Activated CD4-positive, alpha-beta memory T cell treated with anti-CD3 and anti-CD28 coated beads for 36 hours (primary cell): ENCODE measurements at regions of chr6 and their contacts with region 1.

Region 1: GRCh38 chr6:135880066-135880972 is 28.8 kb downstream of the PDE7B start:
- DNase-seq: peak; percentile 65
- H3K4me3 Mint-ChIP-seq: peak overlapping the region; percentile 72
- H3K27ac Mint-ChIP-seq: peak overlapping the region; percentile 94
- H3K4me1 Mint-ChIP-seq: peaks cover 35% of the 10 kb centered on the region
- H3K27me3 Mint-ChIP-seq: no peaks in the 10 kb centered on the region

Region 2: GRCh38 chr6:135851442-135852271 is 28.7 kb before region 1 on chr6 and contains the start of gene PDE7B:
- CTCF ChIA-PET with region 1: no interaction called
- POLR2A ChIA-PET with region 1: no interaction called
- intact Hi-C with region 1: loop called (anchors 1 kb)
- DNase-seq: peak; percentile 53
- H3K4me3 Mint-ChIP-seq: peak within 1 kb of the TSS; percentile 38
- H3K27ac Mint-ChIP-seq: no peak within 1 kb of the TSS
- H3K4me1 Mint-ChIP-seq: peaks cover 17% of the 10 kb centered on the region
- H3K27me3 Mint-ChIP-seq: peaks cover 1% of the 10 kb centered on the region
- total RNA-seq, gene PDE7B: 0.05 to 0.12 TPM

Region 3: GRCh38 chr6:135869857-135870256 is 10.5 kb before region 1 on chr6:
- CTCF ChIA-PET with region 1: no interaction called
- POLR2A ChIA-PET with region 1: no interaction called
- intact Hi-C with region 1: no loop called
- DNase-seq: peak; percentile 27
- H3K4me3 Mint-ChIP-seq: no peak overlapping the region
- H3K27ac Mint-ChIP-seq: no peak overlapping the region
- H3K4me1 Mint-ChIP-seq: peaks cover 5% of the 10 kb centered on the region
- H3K27me3 Mint-ChIP-seq: no peaks in the 10 kb centered on the region

Region 4: DNA sequence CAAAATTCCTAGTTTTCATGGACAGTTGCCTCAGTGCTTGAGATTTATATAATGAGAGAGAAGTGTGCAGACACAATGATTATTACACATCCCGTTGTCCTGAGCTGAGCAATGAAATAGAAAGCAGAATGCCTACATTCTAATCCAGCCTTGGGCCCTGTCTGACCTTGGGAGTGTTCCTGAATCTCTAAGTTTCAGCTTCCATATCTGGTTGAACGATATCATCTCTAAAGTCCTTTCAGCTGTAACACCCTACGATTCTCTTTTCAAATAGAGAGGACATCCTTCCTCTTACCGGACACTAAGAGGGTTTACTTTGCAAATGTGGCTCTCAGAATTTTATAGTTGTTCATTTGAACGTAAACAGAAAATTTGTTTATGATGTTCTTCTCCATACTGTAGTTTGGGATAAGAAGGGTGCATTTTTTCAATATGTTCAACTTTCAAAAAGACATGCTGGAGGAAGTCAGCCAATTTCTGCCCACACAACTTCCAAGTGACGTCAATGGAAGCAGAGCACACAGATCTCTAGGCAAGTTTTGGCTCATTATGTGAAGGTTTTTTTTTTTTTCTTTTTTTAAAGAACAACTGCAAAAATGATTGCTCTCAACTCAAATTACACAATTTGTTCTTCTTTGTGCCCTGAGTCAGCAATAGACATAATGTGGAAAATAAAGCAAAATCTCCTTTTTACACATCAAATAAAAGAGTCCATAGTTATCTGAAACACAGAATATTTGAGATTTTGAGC is 21.6 kb after region 1 on chr6:
- CTCF ChIA-PET with region 1: no interaction called
- POLR2A ChIA-PET with region 1: no interaction called
- intact Hi-C with region 1: loop called (anchors 1 kb)
- DNase-seq: peak; percentile 33
- H3K4me3 Mint-ChIP-seq: no peak overlapping the region
- H3K27ac Mint-ChIP-seq: no peak overlapping the region
- H3K4me1 Mint-ChIP-seq: peaks cover 12% of the 10 kb centered on the region
- H3K27me3 Mint-ChIP-seq: peaks cover 2% of the 10 kb centered on the region

Region 5: DNA sequence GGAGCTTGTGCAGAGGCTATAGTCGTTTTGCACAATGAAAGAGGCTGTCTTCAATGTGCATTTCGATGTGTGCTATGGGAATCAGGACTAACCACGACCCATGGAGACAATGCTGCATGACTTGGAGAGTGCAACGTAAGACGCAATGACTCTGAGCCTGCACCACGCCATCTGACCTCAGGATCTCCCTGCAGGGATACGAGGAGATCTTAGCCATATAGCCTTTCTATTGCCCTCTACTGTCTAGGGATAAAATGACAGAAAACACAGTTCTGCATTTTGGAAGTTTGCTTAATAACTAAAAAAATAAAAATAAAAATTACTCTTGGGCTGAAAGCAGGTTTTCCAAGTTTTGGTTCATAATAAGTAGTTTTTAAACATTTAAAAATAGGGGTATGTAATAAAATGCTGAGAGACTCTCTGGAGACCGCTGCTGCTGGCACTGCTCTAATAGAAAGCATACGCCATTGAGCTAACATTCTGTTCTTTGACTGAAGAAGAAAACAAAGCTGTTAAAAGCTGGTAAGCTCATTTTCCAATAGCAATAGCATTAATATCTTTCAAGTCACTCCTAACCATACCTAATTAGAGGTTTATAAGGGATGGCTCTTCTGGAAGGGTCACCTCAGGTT is 58.4 kb after region 1 on chr6:
- CTCF ChIA-PET with region 1: no interaction called
- POLR2A ChIA-PET with region 1: no interaction called
- intact Hi-C with region 1: no loop called
- DNase-seq: no peak
- H3K4me3 Mint-ChIP-seq: no peak overlapping the region
- H3K27ac Mint-ChIP-seq: no peak overlapping the region
- H3K4me1 Mint-ChIP-seq: no peaks in the 10 kb centered on the region
- H3K27me3 Mint-ChIP-seq: no peaks in the 10 kb centered on the region

Region 6: GRCh38 chr6:136123468-136123867 is 243.1 kb after region 1 on chr6:
- CTCF ChIA-PET with region 1: no interaction called
- POLR2A ChIA-PET with region 1: no interaction called
- intact Hi-C with region 1: no loop called
- DNase-seq: no peak
- H3K4me3 Mint-ChIP-seq: no peak overlapping the region
- H3K27ac Mint-ChIP-seq: no peak overlapping the region
- H3K4me1 Mint-ChIP-seq: no peaks in the 10 kb centered on the region
- H3K27me3 Mint-ChIP-seq: peaks cover 1% of the 10 kb centered on the region